ENCODE measurements at regions of chr12 and their contacts with region 1.

Region 1: DNA sequence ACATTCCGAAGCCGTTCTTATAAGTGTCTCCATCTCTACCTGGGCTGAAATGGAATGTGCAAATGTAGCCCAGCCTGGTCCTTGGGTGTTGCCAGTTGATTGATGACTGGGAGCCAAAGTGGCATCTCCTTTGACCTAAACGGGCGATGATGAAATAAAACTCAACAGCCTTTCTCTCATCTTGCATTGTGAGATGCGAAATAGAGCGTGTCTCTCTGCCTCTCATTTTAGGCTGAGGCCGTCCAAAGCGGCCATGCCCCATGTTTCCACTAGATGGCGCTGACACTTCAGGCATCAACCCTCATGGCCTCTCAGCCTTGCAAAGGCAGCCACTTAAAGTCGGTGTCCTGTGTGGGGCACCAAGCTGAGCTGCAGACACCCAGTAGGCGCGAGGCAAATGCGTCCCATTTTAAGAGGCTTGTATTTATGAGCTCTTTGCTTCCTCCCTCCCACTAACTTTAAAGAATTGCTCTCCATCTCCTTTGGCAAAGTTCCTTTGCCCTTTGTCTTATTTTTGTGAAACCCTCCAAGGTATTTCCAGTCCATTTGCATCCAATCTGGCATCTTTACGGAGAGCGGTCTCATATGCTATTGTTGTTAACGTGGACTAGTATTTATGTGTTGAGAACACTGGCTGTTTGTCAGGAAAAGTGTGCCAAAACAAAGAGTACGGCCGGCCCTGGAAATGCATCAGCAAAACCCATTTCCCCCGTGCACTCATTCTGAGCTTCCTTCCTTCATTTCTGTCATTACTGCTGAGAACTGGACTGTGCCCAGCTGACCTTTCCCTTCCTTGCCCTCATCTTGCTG is 25.0 kb downstream of the GPRC5A start:
- DNase-seq: peak; percentile 84

Region 2: GRCh38 chr12:12983420-12984035 is 67.2 kb after region 1 on chr12:
- CTCF ChIA-PET with region 1: interaction called, 17 read pairs
- POLR2A ChIA-PET with region 1: no interaction called
- DNase-seq: peak; percentile 50